ENCODE measurements at regions of chr9 and their contacts with region 1.

Region 1: GRCh38 chr9:97237951-97238851 is 69.3 kb upstream of the CCDC180 start:
- H3K4me3 ChIP-seq: peak overlapping the region; percentile 66
- H3K27ac ChIP-seq: peak overlapping the region; percentile 89
- H3K4me1 ChIP-seq: 0 out of 2 replicates have a peak, but pooled peaks cover 5% of the 10 kb centered on the region
- CTCF ChIP-seq: no peak

Region 2: GRCh38 chr9:97038909-97039781 is 199.1 kb before region 1 on chr9 and contains the start of gene CTSV:
- CTCF ChIA-PET with region 1: no interaction called
- POLR2A ChIA-PET with region 1: interaction called, 11 read pairs
- H3K4me3 ChIP-seq: peak within 1 kb of the TSS; percentile 59
- H3K27ac ChIP-seq: peak within 1 kb of the TSS; percentile 32; the same call in 1 of the 2 replicates
- H3K4me1 ChIP-seq: no peaks in the 10 kb centered on the region
- CTCF ChIP-seq: no peak

Region 3: DNA sequence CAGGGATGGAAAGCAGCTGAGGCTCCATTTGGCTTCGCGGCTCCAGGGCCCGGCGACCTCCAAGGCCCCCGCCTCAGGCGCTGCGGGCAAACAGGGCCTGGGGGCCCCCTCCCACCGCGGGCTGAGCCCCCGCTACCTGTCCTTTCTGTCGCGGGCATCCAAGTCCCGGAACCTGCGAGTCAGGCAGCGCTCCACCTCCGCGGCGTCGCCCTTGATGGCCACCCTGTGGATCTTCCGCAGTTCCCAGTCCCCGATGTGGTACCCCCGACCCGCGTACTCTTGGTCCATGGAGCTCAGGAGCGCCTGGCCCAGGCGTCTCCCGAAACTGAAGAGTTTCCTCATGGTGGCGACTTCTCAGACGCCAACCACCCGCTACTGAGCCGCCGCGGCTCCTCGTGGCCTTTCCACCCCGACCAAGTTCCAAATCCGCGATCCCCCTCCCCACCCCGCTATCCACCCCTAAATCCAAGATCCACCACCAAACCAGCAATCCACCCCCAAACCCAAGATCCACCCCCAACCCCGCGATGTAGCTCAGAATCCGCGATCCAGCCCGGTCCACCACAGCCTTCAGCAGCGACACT is 17.2 kb before region 1 on chr9:
- CTCF ChIA-PET with region 1: interaction called, 3 read pairs
- POLR2A ChIA-PET with region 1: interaction called, 19 read pairs
- H3K4me3 ChIP-seq: peak overlapping the region; percentile 47
- H3K27ac ChIP-seq: peak overlapping the region; percentile 53; the same call in 1 of the 2 replicates
- H3K4me1 ChIP-seq: no peaks in the 10 kb centered on the region
- CTCF ChIP-seq: no peak

Measured in HEK293 (cell line).